PC-9 (cell line): ENCODE measurements at regions of chr6 and their contacts with region 1.

Region 1: DNA sequence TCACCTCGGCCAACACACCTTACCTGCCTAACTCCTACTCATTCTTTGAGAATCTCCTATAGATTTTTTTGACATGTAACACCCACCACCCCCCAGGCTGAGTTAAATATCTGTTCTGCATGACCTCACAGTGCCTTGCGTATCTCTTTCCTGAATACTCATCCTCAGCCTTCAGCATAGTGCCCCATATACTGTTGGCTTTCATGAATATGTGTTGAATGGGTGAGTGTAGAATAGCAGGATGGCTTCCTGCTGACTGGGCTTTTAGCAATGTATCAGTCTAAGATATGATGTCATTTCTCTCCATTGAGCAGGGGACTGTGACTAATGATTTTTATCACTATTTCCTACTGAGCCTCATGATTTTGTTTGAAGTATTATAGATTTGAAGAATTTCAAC is 361.6 kb upstream of the MARCKS start:
- DNase-seq: peak in 1 of 2 experiments; percentile 70
- H3K4me3 ChIP-seq: no peak overlapping the region
- H3K27ac ChIP-seq: peak overlapping the region; percentile 75
- H3K4me1 ChIP-seq: peaks cover 59% of the 10 kb centered on the region
- H3K27me3 ChIP-seq: no peaks in the 10 kb centered on the region
- CTCF ChIP-seq: no peak

Region 2: GRCh38 chr6:113529196-113529595 is 33.7 kb after region 1 on chr6:
- CTCF ChIA-PET with region 1: no interaction called
- POLR2A ChIA-PET with region 1: no interaction called
- intact Hi-C with region 1: no loop called
- DNase-seq: no peak
- H3K4me3 ChIP-seq: no peak overlapping the region
- H3K27ac ChIP-seq: no peak overlapping the region
- H3K4me1 ChIP-seq: no peaks in the 10 kb centered on the region
- H3K27me3 ChIP-seq: no peaks in the 10 kb centered on the region
- CTCF ChIP-seq: no peak

Region 3: GRCh38 chr6:113558966-113559365 is 63.5 kb after region 1 on chr6:
- CTCF ChIA-PET with region 1: no interaction called
- POLR2A ChIA-PET with region 1: no interaction called
- intact Hi-C with region 1: loop called (anchors 2 kb)
- DNase-seq: peak in 1 of 2 experiments; percentile 77
- H3K4me3 ChIP-seq: peak overlapping the region; percentile 11; the same call in 1 of the 2 replicates
- H3K27ac ChIP-seq: peak overlapping the region; percentile 55
- H3K4me1 ChIP-seq: peaks cover 34% of the 10 kb centered on the region
- H3K27me3 ChIP-seq: no peaks in the 10 kb centered on the region
- CTCF ChIP-seq: no peak

Region 4: GRCh38 chr6:113570641-113571040 is 75.1 kb after region 1 on chr6:
- CTCF ChIA-PET with region 1: no interaction called
- POLR2A ChIA-PET with region 1: interaction called, 11 read pairs
- intact Hi-C with region 1: no loop called
- DNase-seq: no peak
- H3K4me3 ChIP-seq: no peak overlapping the region
- H3K27ac ChIP-seq: no peak overlapping the region
- H3K4me1 ChIP-seq: no peaks in the 10 kb centered on the region
- H3K27me3 ChIP-seq: no peaks in the 10 kb centered on the region
- CTCF ChIP-seq: no peak; the same call in 1 of the 2 replicates